ENCODE measurements at regions of chr6 and their contacts with region 1.

Region 1: GRCh38 chr6:53484476-53485280 is 60.2 kb downstream of the GCLC start:
- DNase-seq: peak; percentile 31
- H3K4me3 Mint-ChIP-seq: no peak overlapping the region
- H3K27ac Mint-ChIP-seq: no peak overlapping the region
- H3K4me1 Mint-ChIP-seq: peaks cover 39% of the 10 kb centered on the region
- H3K27me3 Mint-ChIP-seq: peaks cover 27% of the 10 kb centered on the region

Region 2: DNA sequence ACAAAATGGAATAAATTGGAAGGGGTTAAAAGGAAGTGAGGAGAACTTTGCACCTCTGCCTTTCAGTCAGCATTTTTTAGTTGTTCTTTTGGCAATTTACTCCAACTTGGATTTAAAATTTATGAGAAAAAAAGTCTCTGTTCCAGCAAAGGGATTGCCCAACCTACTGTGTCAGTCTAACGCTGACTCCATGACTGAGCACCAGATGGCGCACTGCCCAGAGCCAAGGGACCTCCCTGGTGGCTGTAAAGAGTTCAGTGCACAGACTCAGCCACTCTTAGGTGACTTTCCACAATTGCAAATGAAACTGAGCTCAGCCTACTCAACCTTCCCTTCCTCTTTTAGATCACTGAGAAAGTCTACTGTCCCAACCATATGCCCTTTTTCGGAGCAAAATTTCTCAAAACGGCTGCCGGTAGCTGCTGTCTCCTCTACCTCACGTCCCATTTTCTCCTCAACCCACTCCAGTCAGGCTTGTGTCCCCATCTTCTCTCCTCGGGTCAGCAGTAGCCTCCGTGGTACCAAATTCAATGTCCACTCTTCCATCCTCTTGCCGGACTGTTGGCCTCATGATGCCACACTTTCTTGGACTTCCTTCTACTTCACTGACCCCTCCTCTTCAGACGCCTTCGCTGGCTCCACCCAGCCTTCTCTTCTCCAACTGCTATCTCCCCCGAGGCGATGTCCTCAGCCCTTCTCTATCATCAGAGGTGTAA is 760.1 kb before region 1 on chr6:
- intact Hi-C with region 1: loop called (anchors 2 kb)
- DNase-seq: peak; percentile 22
- H3K4me3 Mint-ChIP-seq: no peak overlapping the region
- H3K27ac Mint-ChIP-seq: no peak overlapping the region
- H3K4me1 Mint-ChIP-seq: no peaks in the 10 kb centered on the region
- H3K27me3 Mint-ChIP-seq: peaks cover 5% of the 10 kb centered on the region

Region 3: DNA sequence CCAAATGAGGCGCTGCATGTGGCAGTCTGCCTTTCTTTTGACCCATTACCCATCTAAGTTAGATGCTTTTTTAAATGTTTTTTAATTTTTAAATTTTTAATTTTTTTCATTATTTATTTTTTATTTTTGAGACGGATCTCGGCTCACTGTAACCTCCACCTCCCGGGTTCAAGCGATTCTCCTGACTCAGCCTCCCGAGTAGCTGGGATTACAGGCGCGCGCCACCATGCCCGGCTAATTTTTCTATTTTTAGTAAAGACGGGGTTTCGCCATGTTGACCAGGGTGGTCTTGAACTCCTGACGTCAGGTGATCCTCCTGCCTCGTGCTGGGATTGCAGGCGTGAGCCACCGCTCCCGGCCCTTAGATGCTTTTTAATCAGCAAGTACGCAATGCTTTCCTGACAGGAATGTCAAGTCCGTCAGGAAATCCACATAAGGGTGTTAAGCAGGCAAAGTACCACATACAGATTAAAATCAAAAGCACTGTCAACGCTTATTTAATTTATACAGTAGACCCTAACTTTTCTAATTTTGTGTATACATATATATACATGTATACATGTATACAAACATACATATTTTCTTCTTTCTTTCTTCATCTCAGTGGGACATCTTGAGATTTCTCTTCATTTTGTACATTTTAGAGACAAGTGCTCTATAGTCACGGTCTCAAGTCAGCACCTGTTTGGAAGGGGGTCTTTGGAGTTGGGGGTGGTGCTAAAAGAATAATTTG is 488.6 kb before region 1 on chr6:
- intact Hi-C with region 1: loop called (anchors 10 kb)
- DNase-seq: peak; percentile 23
- H3K4me3 Mint-ChIP-seq: peak overlapping the region; percentile 90
- H3K27ac Mint-ChIP-seq: peak overlapping the region; percentile 90
- H3K4me1 Mint-ChIP-seq: peaks cover 30% of the 10 kb centered on the region
- H3K27me3 Mint-ChIP-seq: peaks cover 8% of the 10 kb centered on the region

Region 4: DNA sequence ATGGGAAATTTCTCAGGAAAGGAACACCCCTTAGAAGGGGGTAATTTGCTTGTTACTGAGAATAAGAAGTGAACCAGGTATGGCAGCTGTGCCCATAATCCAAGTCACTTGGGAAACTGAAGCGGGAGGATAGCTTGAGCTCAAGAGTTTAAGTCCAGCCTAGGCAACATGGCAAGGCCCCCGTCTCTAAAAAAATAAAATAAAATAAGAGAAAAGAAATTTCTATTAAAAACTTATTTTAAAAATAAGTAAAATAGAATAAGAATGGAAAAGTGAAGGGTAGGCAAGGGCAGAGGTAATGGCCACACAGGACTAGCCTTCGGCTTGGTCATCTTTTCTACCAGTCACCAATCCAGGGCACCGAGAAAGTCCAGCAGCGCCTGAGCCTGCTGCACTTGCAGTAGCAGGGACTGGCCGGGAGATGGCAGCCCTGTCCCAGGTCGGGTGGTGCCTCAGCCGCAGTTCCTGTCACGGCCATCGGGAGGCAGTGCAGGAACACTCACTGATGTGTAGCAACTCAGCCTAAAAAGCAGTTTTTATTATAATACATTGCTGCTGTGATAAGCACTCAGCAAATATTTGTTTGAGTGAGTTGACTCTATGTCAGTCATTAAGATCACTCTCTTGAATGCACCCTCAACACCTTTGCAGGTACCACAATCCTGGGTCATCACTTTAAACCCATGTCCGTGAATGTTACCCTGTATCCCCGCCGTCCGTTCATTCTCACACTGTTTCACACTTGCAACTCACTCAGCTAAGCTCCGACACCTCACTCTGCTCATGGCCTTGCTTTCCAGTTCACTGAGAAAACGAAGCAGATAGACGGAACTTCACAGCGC is 312.9 kb before region 1 on chr6:
- intact Hi-C with region 1: loop called (anchors 1 kb)
- DNase-seq: peak; percentile 78
- H3K4me3 Mint-ChIP-seq: no peak overlapping the region
- H3K27ac Mint-ChIP-seq: no peak overlapping the region
- H3K4me1 Mint-ChIP-seq: no peaks in the 10 kb centered on the region
- H3K27me3 Mint-ChIP-seq: no peaks in the 10 kb centered on the region

Region 5: DNA sequence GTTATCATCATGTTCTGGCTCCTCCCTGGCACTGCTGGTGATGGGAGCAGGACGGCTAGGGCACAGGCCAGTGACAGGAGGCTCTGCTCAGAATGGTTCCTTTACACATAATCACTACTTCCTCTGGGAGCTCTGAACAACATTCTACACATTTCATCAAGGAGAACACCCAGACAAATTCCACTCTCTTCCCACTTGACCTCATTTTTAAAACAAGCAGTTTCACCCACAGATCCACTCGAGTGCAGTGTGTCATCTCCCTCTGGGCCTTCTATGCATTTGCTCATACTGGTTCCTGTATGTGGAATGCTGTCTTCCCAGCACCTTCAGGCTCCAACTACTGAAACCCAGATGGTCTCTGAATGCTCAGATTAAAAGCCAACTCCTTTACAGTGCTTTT is 220.8 kb before region 1 on chr6:
- intact Hi-C with region 1: loop called (anchors 10 kb)
- DNase-seq: no peak
- H3K4me3 Mint-ChIP-seq: no peak overlapping the region
- H3K27ac Mint-ChIP-seq: peak overlapping the region; percentile 0
- H3K4me1 Mint-ChIP-seq: peaks cover 3% of the 10 kb centered on the region
- H3K27me3 Mint-ChIP-seq: no peaks in the 10 kb centered on the region

Region 6: DNA sequence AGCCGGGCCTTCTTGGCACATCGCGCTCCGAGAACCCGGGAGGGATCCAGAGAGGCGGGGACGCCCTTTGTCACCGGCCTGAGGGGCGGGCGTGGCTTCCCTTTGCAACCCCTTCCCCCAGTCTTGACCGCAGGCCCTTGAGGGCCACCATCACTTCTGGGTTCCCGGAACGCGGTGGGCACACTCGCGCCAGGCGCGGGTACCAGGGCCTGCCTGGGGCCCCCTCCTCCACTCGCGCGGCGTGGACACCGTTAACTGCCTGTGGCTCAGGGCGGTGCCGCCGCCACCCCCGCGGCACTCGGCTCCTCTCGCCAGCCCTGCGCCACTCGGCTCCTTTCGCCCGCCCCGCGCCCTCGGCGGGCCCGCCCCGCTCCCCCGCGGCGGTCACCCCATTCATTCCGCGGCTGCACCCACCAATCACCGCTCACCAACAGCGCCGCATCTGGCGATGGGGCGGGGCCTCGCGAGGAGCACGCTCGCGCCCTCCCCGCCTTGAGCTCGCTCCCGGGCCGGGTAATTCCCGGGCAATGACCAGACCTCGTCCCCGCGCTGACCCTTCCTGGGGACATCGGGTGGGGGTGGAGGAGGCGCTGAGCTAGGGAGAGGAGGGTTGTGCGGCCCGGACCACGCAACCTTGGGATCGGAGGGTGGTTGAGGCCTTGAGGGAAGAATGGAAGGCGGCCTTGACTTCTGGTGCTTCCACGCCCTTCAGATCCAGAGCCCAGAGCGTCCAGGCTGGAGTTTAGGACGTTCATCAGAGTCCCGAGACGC is 125.4 kb before region 1 on chr6:
- intact Hi-C with region 1: loop called (anchors 5 kb)
- DNase-seq: peak; percentile 92
- H3K4me3 Mint-ChIP-seq: peak overlapping the region; percentile 92
- H3K27ac Mint-ChIP-seq: peak overlapping the region; percentile 99
- H3K4me1 Mint-ChIP-seq: peaks cover 36% of the 10 kb centered on the region
- H3K27me3 Mint-ChIP-seq: peaks cover 5% of the 10 kb centered on the region

Region 7: GRCh38 chr6:53437557-53438202 is 47.0 kb before region 1 on chr6:
- intact Hi-C with region 1: loop called (anchors 1 kb)
- DNase-seq: no peak
- H3K4me3 Mint-ChIP-seq: no peak overlapping the region
- H3K27ac Mint-ChIP-seq: no peak overlapping the region
- H3K4me1 Mint-ChIP-seq: peaks cover 17% of the 10 kb centered on the region
- H3K27me3 Mint-ChIP-seq: peaks cover 3% of the 10 kb centered on the region